ENCODE measurements at regions of chr1 and their contacts with region 1.

Region 1: DNA sequence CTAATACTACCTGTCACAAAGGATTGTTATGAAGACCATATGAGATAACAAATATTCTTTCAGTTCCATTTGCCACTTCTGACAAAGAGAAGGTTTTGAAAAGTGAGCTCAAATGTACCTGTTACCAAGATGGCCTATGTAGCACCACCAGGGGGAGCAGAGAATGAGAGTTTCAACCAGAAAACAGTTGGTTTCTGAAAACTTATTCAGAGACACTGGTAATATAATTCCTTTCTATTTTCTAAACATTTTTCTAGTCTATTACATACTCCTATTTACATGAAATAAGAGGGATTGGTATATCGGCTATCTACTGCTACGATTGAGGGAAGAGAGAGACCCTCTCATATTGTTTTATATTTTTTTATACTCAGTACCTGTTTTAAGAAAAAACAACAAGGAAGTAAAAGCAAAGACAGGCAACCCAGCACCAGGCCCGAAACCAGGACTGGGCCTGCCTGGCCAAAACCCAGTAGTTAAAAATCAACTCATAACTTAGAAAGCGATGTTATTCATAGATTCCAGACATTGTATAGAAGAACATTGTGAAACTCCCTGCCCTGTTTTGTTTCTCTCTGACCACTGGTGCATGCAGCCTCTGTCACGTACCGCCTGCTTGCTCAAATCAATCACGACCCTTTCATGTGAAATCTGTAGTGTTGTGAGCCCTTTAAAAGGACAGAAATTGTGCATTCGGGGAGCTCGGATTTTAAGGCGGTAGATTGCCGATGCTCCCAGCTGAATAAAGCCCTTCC is 48.3 kb downstream of the IL23R start:
- DNase-seq: peak; percentile 68
- ATAC-seq: peak; percentile 86
- H3K4me3 ChIP-seq: peak overlapping the region; percentile 14; the same call in 1 of the 2 replicates
- H3K27ac ChIP-seq: peak overlapping the region; percentile 71
- H3K4me1 ChIP-seq: peaks cover 31% of the 10 kb centered on the region
- H3K27me3 ChIP-seq: no peaks in the 10 kb centered on the region
- CTCF ChIP-seq: peak; percentile 33 to 67 (median 66)
- EP300 ChIP-seq: 0 out of 4 replicates have a peak, but pooled peaks of 1 of the 2 experiments have one; percentile 3
- POLR2A ChIP-seq: no peak
- RAD21 ChIP-seq: peak; percentile 52

Region 2: GRCh38 chr1:66981679-66982078 is 232.9 kb before region 1 on chr1:
- CTCF ChIA-PET with region 1: interaction called, 13 read pairs
- POLR2A ChIA-PET with region 1: no interaction called
- RAD21 ChIA-PET with region 1: interaction called, 6 read pairs
- SMC1A ChIA-PET with region 1: interaction called, 6 read pairs
- in situ Hi-C with region 1: no loop called
- intact Hi-C with region 1: no loop called
- DNase-seq: no peak
- ATAC-seq: peak; percentile 60
- H3K4me3 ChIP-seq: no peak overlapping the region
- H3K27ac ChIP-seq: no peak overlapping the region; the same call in 1 of the 2 replicates
- H3K4me1 ChIP-seq: peaks cover 17% of the 10 kb centered on the region
- H3K27me3 ChIP-seq: no peaks in the 10 kb centered on the region
- CTCF ChIP-seq: no peak; a peak in 1 of 6 replicates
- EP300 ChIP-seq: no peak
- POLR2A ChIP-seq: no peak
- RAD21 ChIP-seq: no peak

Region 3: DNA sequence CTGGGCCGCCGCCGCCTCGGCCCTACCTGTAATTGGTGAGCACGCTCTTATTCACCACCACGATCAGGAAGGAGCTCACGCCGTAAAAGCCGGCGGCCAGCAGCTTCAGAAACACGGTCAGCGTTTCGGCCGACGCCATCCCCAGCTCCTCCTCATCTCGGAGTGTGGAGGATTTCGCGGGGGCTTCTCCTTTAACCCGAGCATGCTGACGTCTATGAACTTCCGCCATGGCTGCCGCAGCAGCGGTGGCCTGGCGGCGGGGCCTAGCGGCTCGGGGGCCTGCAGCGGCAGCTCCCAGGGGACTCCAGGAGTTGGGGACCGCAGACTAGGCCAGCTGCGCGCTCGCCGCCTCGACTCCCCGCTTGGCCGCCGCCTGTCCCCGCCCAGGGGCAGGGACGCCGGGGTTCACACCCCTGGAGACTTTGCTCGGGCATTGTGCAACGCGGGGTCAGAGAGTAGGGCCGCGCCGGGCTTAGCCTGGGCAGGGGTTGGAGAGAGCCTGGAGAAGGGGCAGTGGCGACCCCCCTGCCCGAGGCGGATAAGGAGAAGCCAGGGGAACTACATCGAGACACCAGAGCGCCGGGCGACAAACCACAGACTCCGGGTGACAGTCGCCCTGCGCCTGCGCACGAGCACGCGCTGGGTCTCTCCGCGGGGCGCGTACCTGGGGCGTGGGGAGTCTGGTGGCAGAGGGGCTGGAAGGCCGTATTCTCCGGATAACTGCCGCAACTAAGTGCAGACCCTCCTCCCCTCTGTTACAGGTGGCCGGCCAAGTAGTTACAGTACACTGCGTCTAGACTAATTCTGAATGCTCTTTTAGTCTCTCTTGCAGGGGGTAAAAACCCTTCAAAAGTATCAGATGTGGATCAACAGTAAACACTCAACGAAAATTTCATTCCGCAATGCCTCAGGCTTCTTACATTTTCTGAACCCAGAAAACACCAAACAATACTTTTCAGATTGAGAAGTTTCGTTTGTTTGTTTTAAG is 160.5 kb before region 1 on chr1 and contains the start of gene SLC35D1:
- CTCF ChIA-PET with region 1: interaction called, 21 read pairs
- POLR2A ChIA-PET with region 1: no interaction called
- RAD21 ChIA-PET with region 1: interaction called, 3 read pairs
- SMC1A ChIA-PET with region 1: interaction called, 6 read pairs
- in situ Hi-C with region 1: no loop called
- intact Hi-C with region 1: loop called (anchors 5 kb)
- DNase-seq: peak; percentile 39
- ATAC-seq: peak; percentile 83
- H3K4me3 ChIP-seq: peak within 1 kb of the TSS; percentile 82
- H3K27ac ChIP-seq: peak within 1 kb of the TSS; percentile 78
- H3K4me1 ChIP-seq: no peaks in the 10 kb centered on the region
- H3K27me3 ChIP-seq: no peaks in the 10 kb centered on the region; a peak in 1 of 4 replicates
- CTCF ChIP-seq: no peak
- EP300 ChIP-seq: no peak
- POLR2A ChIP-seq: peak; percentile 87
- RAD21 ChIP-seq: no peak
- polyA plus RNA-seq, gene SLC35D1: 2.9 to 3.4 TPM

Region 4: GRCh38 chr1:67149179-67149770 is 65.3 kb before region 1 on chr1:
- CTCF ChIA-PET with region 1: interaction called, 193 read pairs
- POLR2A ChIA-PET with region 1: interaction called, 6 read pairs
- RAD21 ChIA-PET with region 1: interaction called, 102 read pairs
- SMC1A ChIA-PET with region 1: interaction called, 212 read pairs
- in situ Hi-C with region 1: no loop called
- intact Hi-C with region 1: loop called (anchors 1 kb)
- DNase-seq: peak; percentile 45
- ATAC-seq: peak; percentile 94
- H3K4me3 ChIP-seq: no peak overlapping the region
- H3K27ac ChIP-seq: no peak overlapping the region
- H3K4me1 ChIP-seq: no peaks in the 10 kb centered on the region
- H3K27me3 ChIP-seq: no peaks in the 10 kb centered on the region
- CTCF ChIP-seq: peak; percentile 68 to 87 (median 78)
- EP300 ChIP-seq: no peak
- POLR2A ChIP-seq: no peak
- RAD21 ChIP-seq: peak; percentile 90

Region 5: DNA sequence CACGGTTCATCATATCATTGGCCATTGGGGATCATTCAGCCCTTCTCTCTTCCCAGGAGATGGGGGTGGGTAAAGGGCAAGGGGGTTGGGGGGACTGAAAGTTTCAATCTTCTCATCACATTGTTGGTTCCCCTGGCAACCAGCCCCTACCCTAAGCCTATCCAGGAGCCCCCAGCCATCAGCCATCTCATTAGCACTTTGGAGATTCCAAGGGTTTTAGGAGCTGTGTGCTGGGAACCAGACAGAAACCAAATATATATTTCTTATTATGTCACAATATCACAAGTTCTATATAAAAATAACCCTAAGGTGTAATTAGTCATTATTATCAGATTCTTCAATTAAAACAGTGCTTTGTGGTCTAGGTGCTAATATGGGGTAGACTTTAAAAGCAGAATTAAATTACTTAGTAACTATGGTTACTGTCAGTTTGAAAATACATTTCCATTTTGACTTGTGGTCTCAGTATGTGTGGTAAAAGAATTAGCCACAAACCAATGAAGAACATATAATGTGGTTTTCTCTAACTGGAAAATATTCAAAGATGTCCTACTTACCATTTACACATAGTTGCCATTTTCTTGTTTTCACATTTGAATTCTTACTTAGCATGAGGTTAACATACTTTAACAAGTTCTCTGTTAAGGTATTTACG is 20.3 kb before region 1 on chr1:
- CTCF ChIA-PET with region 1: interaction called, 49 read pairs
- POLR2A ChIA-PET with region 1: interaction called, 4 read pairs
- RAD21 ChIA-PET with region 1: interaction called, 8 read pairs
- SMC1A ChIA-PET with region 1: interaction called, 62 read pairs
- in situ Hi-C with region 1: no loop called
- intact Hi-C with region 1: no loop called
- DNase-seq: peak; percentile 67
- ATAC-seq: peak; percentile 75
- H3K4me3 ChIP-seq: no peak overlapping the region
- H3K27ac ChIP-seq: no peak overlapping the region
- H3K4me1 ChIP-seq: peaks cover 20% of the 10 kb centered on the region
- H3K27me3 ChIP-seq: no peaks in the 10 kb centered on the region
- CTCF ChIP-seq: no peak
- EP300 ChIP-seq: peak; percentile 94 to 97
- POLR2A ChIP-seq: no peak
- RAD21 ChIP-seq: no peak

Region 6: DNA sequence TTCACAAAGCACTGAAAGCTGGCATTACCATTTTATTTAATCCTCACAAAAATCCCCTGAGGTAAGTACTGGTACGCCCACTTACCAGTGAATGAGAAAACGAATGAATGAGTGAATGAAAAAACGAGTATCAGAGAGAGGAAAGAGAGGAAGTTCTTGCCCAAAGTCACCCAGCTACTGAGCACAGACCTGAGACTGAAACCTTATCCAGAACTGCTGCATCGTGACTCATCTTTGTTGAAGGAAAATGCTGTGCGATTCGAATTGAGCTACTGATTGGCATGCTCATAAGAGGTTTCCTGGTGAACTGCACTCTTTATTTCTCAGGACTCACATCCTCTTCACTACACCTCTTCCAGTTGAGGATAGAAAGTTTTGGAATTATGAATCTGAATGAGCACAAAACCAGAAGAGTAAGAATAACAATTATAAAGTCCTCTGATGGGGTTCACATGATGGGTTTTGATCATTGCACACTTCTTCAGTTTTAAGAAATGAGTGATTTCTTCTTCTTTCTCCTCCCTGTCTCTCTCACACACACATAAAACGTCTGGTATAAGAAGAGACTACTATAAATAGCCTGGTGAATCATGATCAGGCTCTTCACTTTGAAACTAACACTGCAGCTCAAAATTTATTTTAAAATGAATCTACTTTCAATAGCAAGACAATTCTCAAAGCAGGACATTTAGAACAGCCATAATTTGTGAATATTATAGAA is 125.2 kb after region 1 on chr1:
- CTCF ChIA-PET with region 1: interaction called, 26 read pairs
- POLR2A ChIA-PET with region 1: no interaction called
- RAD21 ChIA-PET with region 1: interaction called, 25 read pairs
- SMC1A ChIA-PET with region 1: interaction called, 57 read pairs
- in situ Hi-C with region 1: no loop called
- intact Hi-C with region 1: loop called (anchors 5 kb)
- DNase-seq: peak; percentile 84
- ATAC-seq: peak; percentile 35
- H3K4me3 ChIP-seq: peak overlapping the region; percentile 20; the same call in 1 of the 2 replicates
- H3K27ac ChIP-seq: peak overlapping the region; percentile 87
- H3K4me1 ChIP-seq: peaks cover 71% of the 10 kb centered on the region
- H3K27me3 ChIP-seq: no peaks in the 10 kb centered on the region
- CTCF ChIP-seq: no peak
- EP300 ChIP-seq: no peak
- POLR2A ChIP-seq: no peak
- RAD21 ChIP-seq: no peak

Region 7: GRCh38 chr1:67489643-67490042 is 275.0 kb after region 1 on chr1:
- CTCF ChIA-PET with region 1: interaction called, 8 read pairs
- POLR2A ChIA-PET with region 1: no interaction called
- RAD21 ChIA-PET with region 1: interaction called, 5 read pairs
- SMC1A ChIA-PET with region 1: interaction called, 26 read pairs
- in situ Hi-C with region 1: no loop called
- intact Hi-C with region 1: no loop called
- DNase-seq: peak; percentile 0
- ATAC-seq: peak; percentile 81
- H3K4me3 ChIP-seq: no peak overlapping the region
- H3K27ac ChIP-seq: no peak overlapping the region
- H3K4me1 ChIP-seq: no peaks in the 10 kb centered on the region
- H3K27me3 ChIP-seq: no peaks in the 10 kb centered on the region
- CTCF ChIP-seq: peak; percentile 36 to 51 (median 36); a peak in 4 of 6 replicates
- EP300 ChIP-seq: no peak
- POLR2A ChIP-seq: no peak
- RAD21 ChIP-seq: peak; percentile 58

Region 8: GRCh38 chr1:67599085-67599484 is 384.5 kb after region 1 on chr1:
- CTCF ChIA-PET with region 1: no interaction called
- POLR2A ChIA-PET with region 1: no interaction called
- RAD21 ChIA-PET with region 1: no interaction called
- SMC1A ChIA-PET with region 1: no interaction called
- in situ Hi-C with region 1: no loop called
- intact Hi-C with region 1: no loop called
- DNase-seq: no peak
- ATAC-seq: no peak
- H3K4me3 ChIP-seq: no peak overlapping the region
- H3K27ac ChIP-seq: no peak overlapping the region
- H3K4me1 ChIP-seq: no peaks in the 10 kb centered on the region
- H3K27me3 ChIP-seq: no peaks in the 10 kb centered on the region
- CTCF ChIP-seq: no peak
- EP300 ChIP-seq: no peak
- POLR2A ChIP-seq: no peak
- RAD21 ChIP-seq: no peak

Measured in GM12878 (cell line).